OCI-LY7 (cell line): ENCODE measurements at regions of chr4 and their contacts with region 1.

Region 1: GRCh38 chr4:48779998-48780742 is at the start of gene FRYL:
- DNase-seq: peak; percentile 99
- H3K4me3 ChIP-seq: peak within 1 kb of the TSS; percentile 83
- H3K27ac ChIP-seq: peak within 1 kb of the TSS; percentile 90
- H3K4me1 ChIP-seq: peaks cover 47% of the 10 kb centered on the region
- CTCF ChIP-seq: no peak
- total RNA-seq, gene FRYL: 85.4 and 91.9 TPM in 2 replicates

Region 2: GRCh38 chr4:48578132-48578968 is 201.8 kb before region 1 on chr4:
- CTCF ChIA-PET with region 1: interaction called, 3 read pairs
- POLR2A ChIA-PET with region 1: no interaction called
- intact Hi-C with region 1: loop called (anchors 5 kb)
- DNase-seq: peak; percentile 72
- H3K4me3 ChIP-seq: no peak overlapping the region
- H3K27ac ChIP-seq: no peak overlapping the region
- H3K4me1 ChIP-seq: no peaks in the 10 kb centered on the region
- CTCF ChIP-seq: peak; percentile 96

Region 3: DNA sequence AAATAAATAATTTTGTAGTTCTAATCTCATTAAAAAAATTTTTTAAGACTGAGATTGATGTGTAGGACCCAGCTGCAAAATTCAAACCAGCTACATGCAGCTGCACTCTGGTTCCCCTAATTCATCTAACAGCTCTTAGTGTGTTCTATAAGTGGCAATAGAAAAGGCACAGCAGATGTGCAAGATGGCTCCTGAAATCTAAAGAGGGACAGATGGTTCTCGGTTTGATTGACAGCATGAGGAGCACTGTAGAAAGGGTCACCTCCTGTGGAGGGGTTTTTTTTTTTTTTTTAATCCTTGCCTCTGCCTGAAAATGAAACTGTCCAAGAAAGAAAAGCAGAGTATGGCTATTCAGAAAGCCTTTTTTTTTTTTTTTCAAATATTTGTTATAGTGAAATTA is 33.8 kb after region 1 on chr4:
- CTCF ChIA-PET with region 1: no interaction called
- POLR2A ChIA-PET with region 1: interaction called, 24 read pairs
- intact Hi-C with region 1: loop called (anchors 1 kb)
- DNase-seq: peak; percentile 96
- H3K4me3 ChIP-seq: peak overlapping the region; percentile 36
- H3K27ac ChIP-seq: peak overlapping the region; percentile 86
- H3K4me1 ChIP-seq: peaks cover 51% of the 10 kb centered on the region
- CTCF ChIP-seq: no peak

Region 4: DNA sequence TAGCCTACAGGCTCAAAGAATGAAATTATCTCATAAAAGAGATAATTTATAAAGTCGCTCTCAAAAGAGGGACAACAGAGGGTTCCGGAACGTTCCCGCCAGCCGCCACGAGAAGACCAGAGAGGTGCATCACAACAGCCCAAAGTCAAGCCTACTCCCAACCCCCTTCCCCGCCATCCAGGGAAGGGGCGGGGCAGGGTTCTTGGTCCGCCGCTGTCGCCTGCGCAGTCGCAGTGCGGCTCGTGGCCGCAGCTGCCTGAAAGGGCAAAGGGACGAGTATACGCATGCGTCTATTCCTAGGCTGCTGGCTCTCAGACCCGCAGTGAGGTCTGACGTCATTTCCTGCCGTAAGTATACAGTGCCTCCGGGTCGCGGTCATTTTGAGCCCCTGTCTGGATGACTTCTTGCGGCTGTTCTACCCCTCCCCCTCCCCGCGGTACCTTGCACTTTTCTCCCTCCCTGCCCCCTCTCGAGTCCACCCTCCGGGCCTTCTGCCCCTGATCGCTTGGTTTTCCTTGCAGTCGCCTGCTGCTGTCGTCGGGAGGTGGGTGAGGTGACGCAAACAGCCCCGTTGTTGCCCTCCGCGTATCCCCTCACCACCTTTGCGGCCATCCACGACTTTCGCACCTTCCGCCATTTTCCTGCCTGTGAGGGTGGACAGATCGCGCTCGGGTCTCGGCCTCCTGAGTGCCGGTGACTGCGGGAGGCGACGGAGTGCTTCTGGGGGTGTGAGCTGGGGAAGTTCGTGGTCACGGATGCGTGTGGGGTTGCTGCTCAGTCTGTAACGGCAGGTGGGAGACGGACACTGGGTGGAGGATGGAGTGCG is 50.7 kb after region 1 on chr4 and contains the start of gene OCIAD1:
- CTCF ChIA-PET with region 1: interaction called, 3 read pairs
- POLR2A ChIA-PET with region 1: interaction called, 5 read pairs
- intact Hi-C with region 1: loop called (anchors 1 kb)
- DNase-seq: peak; percentile 100
- H3K4me3 ChIP-seq: peak within 1 kb of the TSS; percentile 97
- H3K27ac ChIP-seq: peak within 1 kb of the TSS; percentile 86
- H3K4me1 ChIP-seq: peaks cover 22% of the 10 kb centered on the region
- CTCF ChIP-seq: no peak
- total RNA-seq, gene OCIAD1: 50.4 and 76.1 TPM in 2 replicates

Region 5: DNA sequence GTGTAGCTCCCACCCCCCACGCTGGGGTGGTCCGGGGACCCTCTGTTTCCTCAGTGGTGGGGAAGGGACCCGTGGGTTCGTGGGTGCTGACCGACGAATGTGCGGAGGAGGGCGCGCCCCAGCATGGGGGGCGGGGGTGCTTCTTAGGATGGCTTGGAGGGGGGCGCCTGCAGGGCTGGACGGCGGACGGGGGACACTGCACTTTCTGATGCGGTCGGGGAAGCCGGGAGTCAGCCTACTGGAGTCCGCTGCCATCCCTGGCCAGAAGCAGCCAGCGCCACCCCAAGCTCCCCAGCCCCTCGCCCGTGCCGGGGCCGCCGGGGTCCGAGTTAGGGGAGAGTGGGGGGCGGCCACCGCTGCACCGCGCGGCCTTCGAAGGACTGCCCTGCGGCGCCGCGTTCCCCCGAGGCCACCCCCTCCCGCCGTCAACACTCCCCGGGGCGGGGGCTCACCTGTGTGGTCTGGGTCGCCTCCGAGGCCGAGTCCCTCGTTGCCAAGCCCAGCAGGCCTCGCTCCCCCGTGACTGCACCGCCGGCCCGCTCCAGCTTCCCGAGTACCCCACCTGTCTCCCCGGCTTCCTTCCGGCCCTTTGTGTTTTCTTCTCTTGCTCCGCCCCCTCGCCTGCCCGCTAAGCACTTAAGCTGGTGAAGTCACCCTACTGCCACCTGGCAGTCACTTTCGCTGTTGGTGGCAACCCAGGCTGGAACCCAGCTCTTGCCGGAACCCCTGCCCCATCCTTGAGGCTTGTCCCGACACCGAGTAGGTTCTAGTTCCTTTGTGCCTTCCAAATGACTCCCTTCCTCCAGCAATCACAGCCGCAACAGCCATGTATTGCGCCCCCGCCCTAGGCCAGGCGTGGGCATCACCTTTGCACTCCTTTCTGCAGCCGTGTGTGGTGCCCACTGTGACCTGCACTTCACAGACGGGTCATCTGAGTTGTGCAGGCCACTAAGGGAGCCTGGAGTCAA is 126.3 kb after region 1 on chr4 and contains the start of gene OCIAD2:
- CTCF ChIA-PET with region 1: no interaction called
- POLR2A ChIA-PET with region 1: interaction called, 8 read pairs
- intact Hi-C with region 1: loop called (anchors 1 kb)
- DNase-seq: peak; percentile 92
- H3K4me3 ChIP-seq: peak within 1 kb of the TSS; percentile 88
- H3K27ac ChIP-seq: peak within 1 kb of the TSS; percentile 36
- H3K4me1 ChIP-seq: peaks cover 28% of the 10 kb centered on the region
- CTCF ChIP-seq: peak; percentile 69
- total RNA-seq, gene OCIAD2: 102 and 125 TPM in 2 replicates